Activated CD4-positive, alpha-beta memory T cell treated with anti-CD3 and anti-CD28 coated beads, Interleukin-2, amount 10 ng/mL, durations not matched to agents 7 days and 5 days (primary cell): ENCODE measurements at regions of chr16 and their contacts with region 1.

Region 1: DNA sequence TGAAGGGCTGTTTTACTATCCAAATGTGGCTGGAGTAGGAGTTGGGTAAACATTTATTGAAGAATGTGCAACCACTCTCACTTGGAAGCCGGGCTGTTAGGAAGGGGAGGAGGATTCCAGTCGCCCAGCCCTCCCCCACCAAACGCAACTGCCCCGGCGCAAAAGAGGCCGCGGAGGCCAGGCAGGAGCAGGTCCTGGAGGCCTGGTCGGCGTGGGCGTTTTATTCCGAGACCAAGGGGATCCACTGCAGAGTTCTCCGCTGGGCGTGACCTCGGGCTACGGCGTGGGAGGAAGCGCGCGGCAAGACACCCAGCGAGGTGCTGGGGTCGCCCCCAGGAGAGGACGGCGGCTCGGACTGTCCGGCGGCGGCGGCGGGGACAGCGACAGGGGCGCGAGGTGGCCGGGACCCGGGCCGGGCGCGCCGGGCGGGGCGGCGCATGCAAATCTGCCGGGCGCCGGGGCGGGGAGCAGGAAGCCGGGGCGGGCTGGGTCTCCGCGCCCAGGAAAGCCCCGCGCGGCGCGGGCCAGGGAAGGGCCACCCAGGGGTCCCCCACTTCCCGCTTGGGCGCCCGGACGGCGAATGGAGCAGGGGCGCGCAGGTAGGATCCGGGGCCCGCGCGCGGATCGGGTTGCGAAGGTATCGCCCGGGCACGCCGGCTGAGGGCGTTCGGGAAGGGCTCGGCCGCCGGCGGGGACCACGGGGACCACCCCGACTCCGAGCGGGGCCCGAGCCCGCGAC is at the start of gene IL4R:
- DNase-seq: peak; percentile 69
- H3K4me3 Mint-ChIP-seq: peak within 1 kb of the TSS; percentile 97
- H3K27ac Mint-ChIP-seq: peak within 1 kb of the TSS; percentile 98
- H3K4me1 Mint-ChIP-seq: peaks cover 45% of the 10 kb centered on the region
- H3K27me3 Mint-ChIP-seq: peaks cover 8% of the 10 kb centered on the region
- total RNA-seq, gene IL4R: 257 to 268 TPM

Region 2: DNA sequence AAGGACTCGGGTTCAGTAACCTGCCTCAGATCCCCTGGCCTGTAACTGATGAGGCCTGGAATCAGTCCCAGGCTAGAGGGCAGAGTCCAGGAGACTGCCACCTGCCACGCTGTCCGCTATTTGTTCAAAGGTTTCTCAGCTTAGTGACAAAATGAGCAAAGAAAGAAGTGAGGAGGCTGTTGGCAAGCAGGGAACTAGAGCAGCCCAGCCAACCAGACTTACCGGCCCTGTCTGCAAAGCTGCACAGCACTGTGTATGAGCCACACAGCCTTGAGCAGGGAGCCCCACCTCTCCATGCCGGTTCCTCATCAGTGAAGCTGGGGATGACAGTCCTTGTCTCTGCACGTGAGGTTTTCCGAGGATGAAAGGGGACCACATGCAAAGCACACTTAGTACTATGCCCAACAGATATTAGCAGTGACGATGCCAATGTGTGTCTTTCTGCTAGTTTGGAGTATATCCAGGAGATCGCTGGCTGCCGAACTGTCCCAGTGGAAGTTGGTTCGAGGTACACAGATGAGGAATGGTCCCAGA is 99.1 kb before region 1 on chr16:
- CTCF ChIA-PET with region 1: no interaction called
- POLR2A ChIA-PET with region 1: no interaction called
- DNase-seq: no peak
- H3K4me3 Mint-ChIP-seq: no peak overlapping the region
- H3K27ac Mint-ChIP-seq: no peak overlapping the region
- H3K4me1 Mint-ChIP-seq: no peaks in the 10 kb centered on the region
- H3K27me3 Mint-ChIP-seq: no peaks in the 10 kb centered on the region

Region 3: DNA sequence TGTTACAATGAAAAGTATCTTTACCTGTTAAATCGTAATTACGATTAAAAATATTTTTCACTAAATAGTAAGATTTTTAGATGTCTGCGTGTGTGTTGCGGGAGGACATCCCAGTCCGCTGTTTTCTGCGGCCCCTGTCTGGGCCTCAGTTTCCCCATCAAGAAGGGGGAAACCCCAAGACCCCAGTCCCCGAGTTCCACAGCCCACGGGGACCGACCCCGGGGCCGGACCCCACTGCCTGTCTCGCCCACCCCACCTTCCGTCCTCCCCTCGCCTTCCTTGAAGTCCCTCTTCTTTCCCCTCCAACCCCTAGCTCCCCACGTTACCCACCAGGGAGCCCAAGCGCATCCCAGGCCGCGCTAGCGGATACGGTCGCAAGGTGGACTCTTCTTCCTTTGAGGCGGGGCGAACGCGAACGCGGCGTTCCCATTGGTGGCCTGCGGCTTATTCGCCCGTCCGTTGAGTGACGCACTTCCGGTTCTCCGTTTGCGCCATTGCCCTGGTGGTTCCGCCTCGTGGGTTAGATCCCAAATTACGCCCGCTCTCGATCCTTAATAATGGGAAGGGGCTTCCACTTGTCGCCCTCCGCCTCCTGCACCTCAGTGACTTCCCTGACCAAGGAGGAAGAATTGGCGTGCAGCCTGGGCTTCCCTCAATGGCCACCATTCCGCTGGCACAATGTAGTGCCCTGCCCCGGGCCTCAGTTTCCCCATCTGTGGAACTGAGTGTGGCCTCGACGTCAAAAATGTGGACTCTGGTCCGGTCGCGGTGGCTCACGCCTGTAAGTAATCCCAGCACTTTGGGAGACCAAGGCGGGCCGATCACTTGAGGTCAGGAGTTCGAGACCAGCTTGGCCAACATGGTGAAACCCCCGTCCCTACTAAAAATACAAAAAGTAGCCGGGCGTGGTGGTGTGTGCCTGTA is 45.0 kb before region 1 on chr16 and contains the start of gene NSMCE1:
- CTCF ChIA-PET with region 1: interaction called, 5 read pairs
- POLR2A ChIA-PET with region 1: interaction called, 223 read pairs
- DNase-seq: peak; percentile 97
- H3K4me3 Mint-ChIP-seq: peak within 1 kb of the TSS; percentile 98
- H3K27ac Mint-ChIP-seq: peak within 1 kb of the TSS; percentile 90
- H3K4me1 Mint-ChIP-seq: peaks cover 65% of the 10 kb centered on the region
- H3K27me3 Mint-ChIP-seq: no peaks in the 10 kb centered on the region
- total RNA-seq, gene NSMCE1: 100 to 106 TPM

Region 4: DNA sequence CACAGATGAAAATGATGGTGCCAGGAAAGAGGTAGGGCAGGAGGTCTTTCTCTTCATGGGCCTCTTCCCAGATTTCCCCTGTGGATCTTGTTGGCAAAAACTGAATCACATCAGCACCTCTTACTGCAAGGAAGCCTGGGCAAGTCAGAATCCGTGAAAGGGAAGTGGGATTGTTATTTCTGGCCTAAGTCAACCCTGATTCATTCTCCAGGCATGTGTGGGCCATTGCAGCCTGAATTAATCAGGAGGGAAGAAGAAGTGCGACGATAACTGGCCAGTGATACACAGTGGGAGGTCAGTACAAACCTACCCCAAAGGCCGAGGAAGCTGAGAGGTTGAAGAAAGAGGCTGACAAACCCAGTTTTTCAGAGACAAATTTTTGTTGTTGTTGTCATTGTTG is 27.1 kb before region 1 on chr16:
- CTCF ChIA-PET with region 1: no interaction called
- POLR2A ChIA-PET with region 1: interaction called, 78 read pairs
- DNase-seq: no peak
- H3K4me3 Mint-ChIP-seq: no peak overlapping the region
- H3K27ac Mint-ChIP-seq: no peak overlapping the region
- H3K4me1 Mint-ChIP-seq: peaks cover 66% of the 10 kb centered on the region
- H3K27me3 Mint-ChIP-seq: peaks cover 20% of the 10 kb centered on the region

Region 5: DNA sequence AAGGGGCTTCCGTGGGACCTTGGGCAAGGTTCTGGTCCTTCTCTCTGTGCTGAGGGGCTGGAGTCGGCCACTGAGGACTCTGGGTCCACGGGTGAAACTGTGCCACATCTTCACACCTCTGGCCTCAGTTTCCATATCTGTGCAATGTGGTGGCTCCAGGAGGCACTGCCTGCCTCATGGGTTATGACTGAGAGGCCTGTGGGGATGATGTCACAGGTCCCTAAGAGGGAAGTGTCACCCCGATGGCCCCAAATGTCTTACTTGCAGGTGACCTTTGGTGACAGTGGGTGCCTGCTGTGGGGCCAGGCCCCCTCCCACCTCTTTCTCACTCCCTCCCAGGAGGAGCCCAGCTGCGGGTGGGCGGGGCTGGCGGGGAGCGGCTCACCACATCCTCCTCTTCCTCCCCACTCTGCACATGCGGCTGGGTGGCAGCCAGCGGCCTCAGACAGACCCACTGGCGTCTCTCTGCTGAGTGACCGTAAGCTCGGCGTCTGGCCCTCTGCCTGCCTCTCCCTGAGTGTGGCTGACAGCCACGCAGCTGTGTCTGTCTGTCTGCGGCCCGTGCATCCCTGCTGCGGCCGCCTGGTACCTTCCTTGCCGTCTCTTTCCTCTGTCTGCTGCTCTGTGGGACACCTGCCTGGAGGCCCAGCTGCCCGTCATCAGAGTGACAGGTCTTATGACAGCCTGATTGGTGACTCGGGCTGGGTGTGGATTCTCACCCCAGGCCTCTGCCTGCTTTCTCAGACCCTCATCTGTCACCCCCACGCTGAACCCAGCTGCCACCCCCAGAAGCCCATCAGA is 88.4 kb after region 1 on chr16 and contains the start of gene IL21R:
- CTCF ChIA-PET with region 1: interaction called, 4 read pairs
- POLR2A ChIA-PET with region 1: interaction called, 47 read pairs
- DNase-seq: peak; percentile 88
- H3K4me3 Mint-ChIP-seq: peak within 1 kb of the TSS; percentile 92
- H3K27ac Mint-ChIP-seq: peak within 1 kb of the TSS; percentile 96
- H3K4me1 Mint-ChIP-seq: peaks cover 70% of the 10 kb centered on the region
- H3K27me3 Mint-ChIP-seq: peaks cover 6% of the 10 kb centered on the region
- total RNA-seq, gene IL21R: 29.2 to 29.5 TPM

Region 6: DNA sequence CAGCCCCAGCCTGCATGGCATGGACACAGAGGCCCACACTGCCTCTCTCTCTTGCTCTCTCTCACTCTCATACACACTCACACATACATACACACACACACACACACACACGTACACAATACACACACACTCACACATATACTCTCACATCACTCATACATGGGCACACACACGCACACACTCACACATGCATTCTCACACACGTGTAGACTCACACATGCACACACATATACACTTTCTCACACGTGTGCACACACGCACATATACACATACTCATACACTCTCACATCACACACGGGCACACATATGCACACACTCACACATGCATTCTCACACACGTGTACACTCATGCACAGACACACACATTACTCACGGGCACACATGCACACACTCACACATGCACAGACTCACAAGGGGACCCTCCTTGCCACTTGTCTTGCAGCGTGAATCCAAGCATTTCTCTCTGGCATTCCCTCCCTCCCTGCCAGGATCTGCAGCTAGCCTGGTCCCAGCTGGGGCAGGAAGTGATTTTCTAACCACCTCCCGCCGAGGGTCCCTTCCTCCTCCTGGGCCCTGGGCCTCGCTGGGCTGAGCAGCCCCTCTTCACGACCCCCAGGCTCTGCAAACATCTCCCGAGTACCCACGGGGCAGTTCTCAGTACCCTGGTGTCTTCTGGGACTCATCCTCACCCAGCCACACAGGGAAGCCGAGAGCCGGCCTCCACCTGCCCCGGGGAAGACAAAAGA is 125.9 kb after region 1 on chr16:
- CTCF ChIA-PET with region 1: no interaction called
- POLR2A ChIA-PET with region 1: no interaction called
- DNase-seq: no peak
- H3K4me3 Mint-ChIP-seq: no peak overlapping the region
- H3K27ac Mint-ChIP-seq: no peak overlapping the region
- H3K4me1 Mint-ChIP-seq: peaks cover 4% of the 10 kb centered on the region
- H3K27me3 Mint-ChIP-seq: no peaks in the 10 kb centered on the region

Region 7: DNA sequence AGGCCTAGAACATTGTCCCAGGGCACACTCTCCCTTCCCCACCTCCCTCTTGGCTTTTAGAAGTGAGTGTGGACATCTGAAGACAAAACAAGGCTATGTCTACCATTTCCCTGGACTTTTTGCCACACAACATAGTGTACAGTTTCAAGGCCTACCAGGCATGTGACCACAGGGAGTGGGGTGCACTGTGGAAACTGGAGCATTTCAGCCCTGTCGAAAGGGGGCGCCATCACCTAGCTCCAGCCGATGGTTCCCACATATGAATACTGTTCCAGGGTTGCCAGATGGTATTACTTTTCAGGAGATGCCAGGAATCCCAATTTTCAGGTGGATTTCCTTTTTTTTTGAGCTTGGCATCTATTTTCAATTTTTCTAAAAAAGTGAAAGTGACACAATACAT is 377.0 kb after region 1 on chr16:
- CTCF ChIA-PET with region 1: no interaction called
- POLR2A ChIA-PET with region 1: no interaction called
- DNase-seq: peak; percentile 37
- H3K4me3 Mint-ChIP-seq: no peak overlapping the region
- H3K27ac Mint-ChIP-seq: no peak overlapping the region
- H3K4me1 Mint-ChIP-seq: peaks cover 2% of the 10 kb centered on the region
- H3K27me3 Mint-ChIP-seq: no peaks in the 10 kb centered on the region

Region 8: DNA sequence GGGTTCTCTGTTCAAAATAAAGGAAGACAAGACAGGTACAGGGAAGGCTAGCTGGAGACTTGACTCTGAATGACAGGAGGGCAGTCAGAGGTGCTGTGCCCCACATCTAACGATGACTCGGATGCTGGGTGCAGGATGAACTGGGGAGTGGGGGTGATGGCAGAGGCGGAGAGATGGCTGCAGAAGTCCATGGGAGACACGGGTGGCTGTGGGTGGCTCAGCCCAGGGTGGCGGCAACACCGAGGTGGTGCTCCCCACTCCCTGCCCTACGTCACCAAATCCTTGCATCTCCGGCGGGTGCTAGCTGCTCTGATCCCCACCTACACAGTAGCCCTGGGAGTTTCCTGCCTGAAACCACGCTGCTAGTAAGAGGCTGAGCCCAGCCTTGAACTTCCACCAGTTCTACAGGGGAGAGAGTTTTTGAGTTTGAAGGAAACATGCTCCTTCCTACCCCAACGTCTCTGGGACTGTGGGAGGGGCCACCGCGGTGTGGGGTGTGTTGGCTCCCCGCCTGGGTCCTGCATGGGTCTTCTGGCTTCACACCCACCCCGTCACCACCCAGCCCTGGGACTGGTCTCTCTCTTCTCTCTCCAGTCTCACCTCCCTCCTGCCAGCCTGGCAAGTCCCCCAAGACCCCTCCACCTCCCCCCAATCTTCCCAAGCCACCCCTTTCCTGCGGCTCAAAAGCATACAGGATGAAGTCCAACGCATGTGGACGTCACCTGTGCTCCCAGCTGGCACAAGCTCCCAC is 745.4 kb after region 1 on chr16:
- CTCF ChIA-PET with region 1: no interaction called
- POLR2A ChIA-PET with region 1: no interaction called
- DNase-seq: no peak
- H3K4me3 Mint-ChIP-seq: no peak overlapping the region
- H3K27ac Mint-ChIP-seq: no peak overlapping the region
- H3K4me1 Mint-ChIP-seq: no peaks in the 10 kb centered on the region
- H3K27me3 Mint-ChIP-seq: peaks cover 39% of the 10 kb centered on the region